H1 (cell line): ENCODE measurements at regions of chr20 and their contacts with region 1.

Region 1: GRCh38 chr20:32652739-32653526 is 20.8 kb downstream of the C20orf203 start:
- DNase-seq: peak; percentile 62 to 97
- H3K4me3 ChIP-seq: no peak overlapping the region; a peak in 1 of 8 replicates
- H3K27ac ChIP-seq: no peak overlapping the region
- H3K4me1 ChIP-seq: peaks cover 0 to 7% (median 0%) of the 10 kb centered on the region in 4 experiments; a peak in 2 of 7 replicates
- H3K27me3 ChIP-seq: no peaks in the 10 kb centered on the region
- CTCF ChIP-seq: peak; percentile 94 to 98 (median 96)
- EP300 ChIP-seq: no peak
- POLR2A ChIP-seq: no peak
- RAD21 ChIP-seq: peak; percentile 99 to 100

Region 2: DNA sequence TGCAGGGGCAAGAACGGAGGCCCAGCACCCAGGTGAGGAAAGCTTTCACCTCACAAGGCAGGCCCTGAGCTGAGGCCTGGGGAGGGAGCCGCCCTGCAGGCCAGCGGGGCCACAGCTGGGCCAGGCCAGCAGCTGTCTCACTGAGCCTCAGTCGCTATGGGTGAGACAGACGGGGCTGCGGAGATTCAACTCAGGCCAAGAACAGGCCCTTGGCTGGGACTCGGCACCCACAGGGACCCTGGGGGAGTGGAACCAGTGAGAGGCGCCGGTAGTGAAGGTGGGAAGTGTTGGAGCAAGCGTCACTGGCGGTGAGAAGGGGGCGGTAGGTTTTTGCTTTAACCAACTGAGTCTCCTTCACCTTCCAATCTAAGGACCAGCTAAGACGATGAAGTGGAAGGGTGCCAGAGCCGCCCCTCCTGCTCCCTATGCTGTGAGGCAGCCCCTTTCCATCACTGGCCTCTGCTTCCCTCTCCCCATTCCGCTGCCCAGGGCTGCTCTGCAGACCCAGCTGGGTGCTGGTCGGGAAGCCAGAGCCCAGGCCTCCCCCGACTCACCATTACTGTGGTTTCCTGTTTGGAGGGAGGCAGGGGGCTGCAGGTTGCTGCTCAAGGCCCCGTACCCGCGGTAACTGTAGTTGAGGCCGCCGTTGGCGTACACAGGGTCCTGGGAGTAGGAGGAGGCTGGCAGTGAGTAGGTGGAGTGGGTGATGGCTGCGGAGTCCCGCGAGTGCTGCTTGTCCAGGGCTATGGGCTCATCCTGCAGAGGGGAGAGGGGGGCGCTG is 201.1 kb before region 1 on chr20:
- CTCF ChIA-PET with region 1: no interaction called
- POLR2A ChIA-PET with region 1: no interaction called
- DNase-seq: no peak
- H3K4me3 ChIP-seq: no peak overlapping the region
- H3K27ac ChIP-seq: no peak overlapping the region
- H3K4me1 ChIP-seq: peaks cover 0 to 7% (median 5%) of the 10 kb centered on the region in 4 experiments; a peak in 5 of 7 replicates
- H3K27me3 ChIP-seq: no peaks in the 10 kb centered on the region
- CTCF ChIP-seq: peak in 1 of 3 experiments; percentile 28; a peak in 1 of 4 replicates
- EP300 ChIP-seq: no peak
- POLR2A ChIP-seq: no peak
- RAD21 ChIP-seq: no peak

Region 3: GRCh38 chr20:32528171-32528891 is 124.6 kb before region 1 on chr20:
- CTCF ChIA-PET with region 1: interaction called, 246 read pairs
- POLR2A ChIA-PET with region 1: interaction called, 3 read pairs
- DNase-seq: no peak
- H3K4me3 ChIP-seq: no peak overlapping the region
- H3K27ac ChIP-seq: no peak overlapping the region
- H3K4me1 ChIP-seq: peaks cover 0 to 13% (median 7%) of the 10 kb centered on the region in 4 experiments; a peak in 4 of 7 replicates
- H3K27me3 ChIP-seq: peaks cover 0 to 10% (median 3%) of the 10 kb centered on the region in 4 experiments; a peak in 4 of 7 replicates
- CTCF ChIP-seq: no peak
- EP300 ChIP-seq: no peak
- POLR2A ChIP-seq: no peak
- RAD21 ChIP-seq: no peak

Region 4: DNA sequence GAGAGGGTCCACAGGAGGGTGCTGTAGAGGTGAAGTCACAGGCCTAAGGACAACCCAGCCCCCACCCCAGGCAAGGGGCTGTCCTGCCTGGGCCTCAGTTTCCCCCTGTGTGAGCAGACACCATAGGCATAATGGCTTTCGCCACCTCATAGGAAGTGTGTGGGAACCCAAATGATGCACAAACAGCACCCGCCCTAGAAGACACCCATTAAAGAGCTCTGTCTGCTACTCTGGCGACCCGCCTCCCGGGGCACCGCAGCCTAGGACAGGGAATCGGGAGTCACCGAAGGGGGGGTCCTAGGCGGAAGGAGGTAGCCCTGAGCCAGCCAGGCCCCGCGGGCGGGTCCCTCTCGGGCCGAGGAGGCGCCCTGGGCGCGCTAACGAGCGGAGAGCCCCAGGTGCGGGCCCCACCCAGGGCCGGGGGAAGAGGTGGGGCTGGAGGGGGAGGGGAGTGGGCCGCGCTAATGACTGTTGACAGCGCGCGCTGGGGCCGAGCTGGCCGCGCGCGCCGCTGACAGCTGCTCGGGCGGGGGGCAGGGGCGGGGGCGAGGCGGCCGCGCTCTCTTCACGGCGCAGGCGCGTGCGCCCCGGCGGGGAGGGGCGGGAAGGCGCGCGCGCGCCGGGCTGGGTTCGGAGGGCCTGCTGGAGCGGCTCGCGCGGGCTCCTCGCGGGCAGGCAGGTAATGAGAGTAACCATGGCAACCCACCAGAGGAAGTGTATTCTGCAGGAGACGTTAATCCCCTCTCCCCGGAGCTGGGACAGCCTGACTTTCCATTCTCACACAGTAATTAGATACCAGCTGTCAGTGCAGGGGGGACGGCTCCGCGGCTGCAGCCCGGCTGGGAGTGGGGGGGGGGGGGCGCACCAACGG is 116.7 kb before region 1 on chr20:
- CTCF ChIA-PET with region 1: interaction called, 15 read pairs
- POLR2A ChIA-PET with region 1: no interaction called
- DNase-seq: peak in 1 of 2 experiments; percentile 74
- H3K4me3 ChIP-seq: peak overlapping the region; percentile 17 to 62 (median 40); a peak in 7 of 8 replicates
- H3K27ac ChIP-seq: no peak overlapping the region
- H3K4me1 ChIP-seq: peaks cover 10 to 24% (median 17%) of the 10 kb centered on the region in 4 experiments
- H3K27me3 ChIP-seq: peaks cover 3 to 22% (median 20%) of the 10 kb centered on the region in 4 experiments
- CTCF ChIP-seq: no peak
- EP300 ChIP-seq: no peak
- POLR2A ChIP-seq: no peak
- RAD21 ChIP-seq: no peak

Region 5: DNA sequence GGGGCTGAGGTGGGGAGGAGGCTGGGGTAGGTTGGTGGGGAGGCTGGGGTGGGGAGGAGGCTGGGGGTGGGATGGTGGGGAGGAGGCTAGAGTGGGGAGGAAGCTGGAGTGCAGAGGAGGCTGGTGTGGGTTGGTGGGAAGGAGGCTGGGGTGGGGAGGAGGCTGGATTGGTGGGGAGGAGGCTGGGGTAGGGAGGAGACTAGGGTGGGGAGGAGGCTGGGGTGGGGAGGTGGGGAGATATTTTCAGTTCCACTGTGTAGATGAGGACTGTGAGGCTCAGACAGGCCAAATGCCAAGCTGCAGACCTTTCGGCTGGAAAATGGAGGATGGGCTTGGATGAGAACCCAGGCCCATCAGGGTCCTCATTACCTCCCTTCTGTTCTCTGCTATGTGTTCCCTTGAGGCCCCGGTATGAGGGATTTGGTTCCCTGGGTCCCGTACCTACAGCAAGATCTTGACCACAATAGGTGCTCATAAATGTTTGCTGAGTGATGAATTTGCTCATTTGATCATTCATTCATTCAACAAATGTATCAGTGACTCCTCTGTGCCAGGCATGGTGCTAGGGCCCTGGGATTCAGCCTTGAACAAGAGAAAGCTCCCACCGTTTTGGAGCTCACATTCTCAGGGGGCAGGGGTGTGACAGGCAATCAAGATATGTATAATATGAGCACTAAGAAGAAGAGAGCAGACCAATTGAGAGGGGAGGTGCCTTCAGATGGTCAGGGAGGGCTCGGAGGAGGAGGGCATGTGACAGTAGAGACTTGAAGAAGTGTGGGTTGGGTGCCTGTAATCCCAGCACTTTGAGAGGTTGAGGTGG is 31.7 kb before region 1 on chr20:
- CTCF ChIA-PET with region 1: interaction called, 14 read pairs
- POLR2A ChIA-PET with region 1: interaction called, 3 read pairs
- DNase-seq: no peak
- H3K4me3 ChIP-seq: no peak overlapping the region
- H3K27ac ChIP-seq: no peak overlapping the region
- H3K4me1 ChIP-seq: peaks cover 0 to 2% (median 0%) of the 10 kb centered on the region in 4 experiments; a peak in 1 of 7 replicates
- H3K27me3 ChIP-seq: no peaks in the 10 kb centered on the region
- CTCF ChIP-seq: no peak
- EP300 ChIP-seq: no peak
- POLR2A ChIP-seq: no peak
- RAD21 ChIP-seq: no peak

Region 6: GRCh38 chr20:32626859-32627636 is 25.9 kb before region 1 on chr20:
- CTCF ChIA-PET with region 1: interaction called, 25 read pairs
- POLR2A ChIA-PET with region 1: no interaction called
- DNase-seq: no peak
- H3K4me3 ChIP-seq: no peak overlapping the region
- H3K27ac ChIP-seq: no peak overlapping the region
- H3K4me1 ChIP-seq: peaks cover 0 to 13% (median 9%) of the 10 kb centered on the region in 4 experiments; a peak in 6 of 7 replicates
- H3K27me3 ChIP-seq: no peaks in the 10 kb centered on the region; a peak in 1 of 7 replicates
- CTCF ChIP-seq: no peak
- EP300 ChIP-seq: no peak
- POLR2A ChIP-seq: no peak
- RAD21 ChIP-seq: no peak

Region 7: GRCh38 chr20:32642257-32643046 is 10.5 kb before region 1 on chr20:
- CTCF ChIA-PET with region 1: interaction called, 17 read pairs
- POLR2A ChIA-PET with region 1: no interaction called
- DNase-seq: no peak
- H3K4me3 ChIP-seq: no peak overlapping the region
- H3K27ac ChIP-seq: no peak overlapping the region
- H3K4me1 ChIP-seq: no peaks in the 10 kb centered on the region
- H3K27me3 ChIP-seq: no peaks in the 10 kb centered on the region
- CTCF ChIP-seq: no peak
- EP300 ChIP-seq: no peak
- POLR2A ChIP-seq: no peak
- RAD21 ChIP-seq: no peak

Region 8: DNA sequence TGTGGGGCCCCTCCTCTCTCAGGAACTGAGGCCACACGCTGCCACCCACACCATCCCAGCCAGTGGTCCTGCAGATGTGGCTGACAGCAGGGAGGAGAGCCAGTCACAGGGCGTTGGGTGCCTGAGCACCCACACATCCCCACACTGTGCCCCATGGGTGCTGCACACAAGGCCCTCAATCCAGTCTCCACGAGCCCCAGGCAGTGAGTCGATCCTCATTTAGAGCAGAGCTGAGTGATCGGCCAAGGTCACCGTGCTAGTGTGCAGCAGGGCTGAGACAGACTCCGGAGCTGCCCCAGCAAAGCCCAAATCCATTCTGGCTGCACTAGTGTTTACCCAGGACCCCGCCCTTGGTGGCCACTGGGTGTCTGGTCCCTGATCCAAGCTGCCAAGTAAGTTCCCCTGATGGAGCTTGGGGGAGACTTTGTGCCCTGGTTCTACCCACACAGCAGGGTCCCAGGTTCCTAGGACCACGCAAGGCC is 11.8 kb after region 1 on chr20:
- CTCF ChIA-PET with region 1: interaction called, 16 read pairs
- POLR2A ChIA-PET with region 1: interaction called, 3 read pairs
- DNase-seq: no peak
- H3K4me3 ChIP-seq: no peak overlapping the region
- H3K27ac ChIP-seq: no peak overlapping the region
- H3K4me1 ChIP-seq: peaks cover 0 to 3% (median 1%) of the 10 kb centered on the region in 4 experiments; a peak in 5 of 7 replicates
- H3K27me3 ChIP-seq: no peaks in the 10 kb centered on the region
- CTCF ChIP-seq: no peak
- EP300 ChIP-seq: no peak
- POLR2A ChIP-seq: no peak
- RAD21 ChIP-seq: no peak